ENCODE measurements at regions of chr5 and their contacts with region 1.

Region 1: DNA sequence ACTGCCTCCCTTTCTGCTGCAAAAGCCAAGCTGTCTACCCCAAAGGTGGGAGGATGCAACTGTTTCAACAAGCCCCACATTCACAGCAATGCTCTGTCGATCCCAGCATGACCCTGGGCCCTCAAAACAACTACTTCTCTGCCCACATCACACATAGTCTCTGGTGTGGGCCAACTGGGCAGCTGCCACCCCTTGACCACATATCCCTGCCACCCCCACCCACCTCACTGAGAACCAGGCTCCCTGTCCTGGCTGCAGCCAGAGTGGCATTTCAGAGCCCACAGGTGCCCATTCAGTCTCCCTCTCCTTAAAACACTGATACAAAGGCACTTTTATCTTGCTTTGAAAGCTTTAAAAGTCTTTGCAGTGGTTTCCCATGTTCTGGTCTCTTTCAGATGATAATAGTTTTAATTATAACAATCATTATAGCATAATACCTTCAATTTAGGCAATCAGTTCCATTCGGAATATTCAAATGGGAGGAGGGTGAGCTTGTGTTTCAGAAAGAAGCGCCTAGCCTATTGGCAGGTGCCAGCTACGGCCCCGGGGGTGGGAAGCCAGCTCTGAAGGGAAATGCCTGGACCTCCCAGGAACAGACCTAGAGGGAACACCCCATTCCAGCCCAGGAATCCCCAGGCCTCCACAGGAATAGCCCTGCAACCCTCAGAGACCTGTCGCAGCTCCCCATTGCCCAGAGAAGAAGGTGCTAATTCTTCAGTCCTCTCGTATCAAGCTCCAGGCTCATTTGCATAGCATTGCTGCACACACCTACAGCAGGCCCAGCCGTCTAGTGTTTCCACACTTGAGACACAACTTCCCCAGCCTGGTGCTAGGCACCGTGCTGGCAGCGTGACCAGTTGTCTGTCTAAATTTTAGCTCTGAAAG is 90.8 kb downstream of the C5orf15 start:
- DNase-seq: no peak
- H3K4me3 ChIP-seq: no peak overlapping the region
- H3K27ac ChIP-seq: no peak overlapping the region
- H3K4me1 ChIP-seq: no peaks in the 10 kb centered on the region
- H3K27me3 ChIP-seq: no peaks in the 10 kb centered on the region
- CTCF ChIP-seq: no peak
- POLR2A ChIP-seq: no peak

Region 2: GRCh38 chr5:133785182-133785581 is 92.4 kb before region 1 on chr5:
- intact Hi-C with region 1: no loop called
- DNase-seq: no peak
- H3K4me3 ChIP-seq: no peak overlapping the region
- H3K27ac ChIP-seq: no peak overlapping the region
- H3K4me1 ChIP-seq: no peaks in the 10 kb centered on the region
- H3K27me3 ChIP-seq: no peaks in the 10 kb centered on the region
- CTCF ChIP-seq: no peak
- POLR2A ChIP-seq: no peak

Region 3: DNA sequence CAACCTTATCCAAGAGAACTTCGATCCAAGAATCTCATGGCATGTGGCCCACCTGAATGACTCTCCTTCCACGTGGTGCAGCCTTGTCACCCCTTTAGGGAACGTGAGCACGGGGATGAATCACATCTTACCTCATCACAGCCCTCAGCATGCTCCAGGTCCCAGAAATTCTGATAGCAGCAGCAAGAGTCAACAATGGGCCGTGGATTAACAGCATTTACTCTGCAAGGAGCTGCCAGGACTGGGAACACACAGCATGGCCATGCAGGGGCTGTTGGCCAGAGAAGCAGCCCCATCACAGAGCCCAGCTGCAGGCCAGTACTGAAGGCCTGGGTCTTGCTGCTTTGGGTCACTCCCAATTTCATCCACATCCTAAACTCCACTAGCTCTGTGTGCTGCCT is 59.6 kb before region 1 on chr5:
- intact Hi-C with region 1: no loop called
- DNase-seq: no peak
- H3K4me3 ChIP-seq: no peak overlapping the region
- H3K27ac ChIP-seq: no peak overlapping the region
- H3K4me1 ChIP-seq: no peaks in the 10 kb centered on the region
- H3K27me3 ChIP-seq: no peaks in the 10 kb centered on the region
- CTCF ChIP-seq: no peak
- POLR2A ChIP-seq: no peak

Region 4: GRCh38 chr5:133853646-133854365 is 23.8 kb before region 1 on chr5:
- intact Hi-C with region 1: loop called (anchors 2 kb)
- DNase-seq: no peak
- H3K4me3 ChIP-seq: no peak overlapping the region
- H3K27ac ChIP-seq: no peak overlapping the region
- H3K4me1 ChIP-seq: no peaks in the 10 kb centered on the region
- H3K27me3 ChIP-seq: no peaks in the 10 kb centered on the region
- CTCF ChIP-seq: no peak
- POLR2A ChIP-seq: no peak

Region 5: GRCh38 chr5:134394932-134395331 is 517.3 kb after region 1 on chr5:
- intact Hi-C with region 1: no loop called
- DNase-seq: no peak
- H3K4me3 ChIP-seq: no peak overlapping the region
- H3K27ac ChIP-seq: no peak overlapping the region
- H3K4me1 ChIP-seq: no peaks in the 10 kb centered on the region
- H3K27me3 ChIP-seq: no peaks in the 10 kb centered on the region
- CTCF ChIP-seq: no peak
- POLR2A ChIP-seq: no peak

Measured in vagina (tissue), 2 donors.